Activated CD4-positive, alpha-beta memory T cell treated with anti-CD3 and anti-CD28 coated beads for 36 hours (primary cell): ENCODE measurements at regions of chr6 and their contacts with region 1.

Region 1: DNA sequence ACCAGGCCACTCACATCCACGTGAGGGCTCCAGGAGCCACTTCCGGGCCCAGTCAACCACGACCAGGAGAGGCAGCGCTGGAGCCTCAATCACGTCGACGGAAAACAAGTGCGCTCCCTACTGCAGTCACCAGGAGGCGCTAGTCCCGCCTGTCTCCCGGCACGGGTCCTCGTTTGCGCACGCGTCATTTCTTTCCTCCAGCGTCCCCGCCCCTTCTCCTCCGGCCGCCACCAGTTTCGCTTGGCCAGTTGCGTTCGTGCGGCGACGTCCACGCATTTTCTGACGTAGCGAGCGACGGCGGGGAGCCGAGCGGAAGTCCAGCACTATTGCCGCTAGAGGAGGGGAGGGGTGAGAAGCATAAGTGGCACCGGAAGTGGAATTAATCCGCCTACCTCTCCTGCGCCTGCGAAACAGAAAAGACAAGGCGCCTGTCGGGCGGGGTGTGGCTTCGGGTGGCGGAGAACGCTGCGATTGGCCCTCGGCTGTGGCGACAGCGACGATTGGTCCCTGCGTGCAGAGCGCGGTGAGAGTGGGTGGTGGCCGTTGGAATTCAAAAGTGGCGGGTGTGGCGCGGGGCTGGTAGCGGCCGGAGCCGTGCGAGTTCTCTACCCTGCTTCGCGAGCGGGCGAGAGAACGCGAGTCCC is at the start of gene KIFC1:
- DNase-seq: peak; percentile 100
- H3K4me3 Mint-ChIP-seq: peak within 1 kb of the TSS; percentile 94
- H3K27ac Mint-ChIP-seq: peak within 1 kb of the TSS; percentile 95
- H3K4me1 Mint-ChIP-seq: peaks cover 38% of the 10 kb centered on the region
- H3K27me3 Mint-ChIP-seq: no peaks in the 10 kb centered on the region
- total RNA-seq, gene KIFC1: 94.6 to 103 TPM

Region 2: DNA sequence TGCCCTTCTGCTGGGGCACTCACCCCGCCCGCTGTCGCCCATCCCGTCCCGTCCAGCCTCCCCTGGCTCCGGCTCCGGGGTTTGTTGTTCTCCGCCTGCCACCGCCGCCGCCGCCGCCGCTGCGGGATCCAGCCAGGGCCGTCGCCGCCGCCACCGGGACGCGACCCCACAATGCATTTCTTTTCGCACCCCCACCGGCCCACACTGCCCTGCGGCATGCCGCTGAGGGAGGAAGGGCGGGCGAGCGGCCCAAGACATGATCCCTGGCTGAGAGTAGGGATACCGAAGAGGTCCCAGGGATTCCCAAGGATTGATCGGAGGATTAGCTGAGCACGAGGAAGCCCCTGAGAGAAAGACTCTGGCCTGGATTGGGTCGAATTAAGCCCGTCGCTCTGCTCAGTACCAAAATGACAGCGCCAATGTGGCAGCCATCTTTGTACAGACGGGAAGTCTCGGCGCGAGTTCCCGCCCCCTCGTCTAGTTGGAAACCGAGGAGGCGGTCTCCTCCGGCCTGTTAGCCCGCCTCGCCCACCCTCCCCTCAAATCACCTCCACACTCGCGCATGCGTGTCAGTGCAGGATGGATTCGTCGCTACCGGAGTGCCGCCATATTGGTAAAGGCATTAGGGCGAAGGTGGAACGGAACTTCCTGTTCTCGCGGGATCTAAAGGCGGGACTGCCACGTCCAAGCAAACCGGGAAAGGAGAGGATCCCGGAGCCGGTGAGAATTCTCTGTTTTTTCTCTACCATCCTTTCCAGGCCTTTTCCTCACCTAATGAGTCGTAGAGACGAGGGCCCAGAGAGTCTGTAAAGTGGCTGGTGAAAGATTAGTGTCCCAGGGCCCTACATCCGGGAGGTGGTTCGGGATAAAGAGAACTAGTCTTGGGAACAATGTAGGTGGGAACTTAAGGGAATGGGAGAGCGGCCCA is 190.9 kb before region 1 on chr6 and contains the starts of genes RXRB and SLC39A7:
- CTCF ChIA-PET with region 1: no interaction called
- POLR2A ChIA-PET with region 1: no interaction called
- intact Hi-C with region 1: loop called (anchors 1 kb)
- DNase-seq: peak; percentile 100
- H3K4me3 Mint-ChIP-seq: peak within 1 kb of the TSS; percentile 94
- H3K27ac Mint-ChIP-seq: peak within 1 kb of the TSS; percentile 96
- H3K4me1 Mint-ChIP-seq: peaks cover 60% of the 10 kb centered on the region
- H3K27me3 Mint-ChIP-seq: no peaks in the 10 kb centered on the region
- total RNA-seq, gene RXRB: 40.9 to 41.4 TPM
- total RNA-seq, gene SLC39A7: 42.0 to 45.7 TPM

Region 3: GRCh38 chr6:33299237-33299944 is 92.0 kb before region 1 on chr6:
- CTCF ChIA-PET with region 1: interaction called, 3 read pairs
- POLR2A ChIA-PET with region 1: no interaction called
- intact Hi-C with region 1: loop called (anchors 5 kb)
- DNase-seq: peak; percentile 96
- H3K4me3 Mint-ChIP-seq: peak overlapping the region; percentile 89
- H3K27ac Mint-ChIP-seq: peak overlapping the region; percentile 96
- H3K4me1 Mint-ChIP-seq: peaks cover 30% of the 10 kb centered on the region
- H3K27me3 Mint-ChIP-seq: no peaks in the 10 kb centered on the region

Region 4: GRCh38 chr6:33323623-33323948 is 67.8 kb before region 1 on chr6:
- CTCF ChIA-PET with region 1: no interaction called
- POLR2A ChIA-PET with region 1: no interaction called
- intact Hi-C with region 1: loop called (anchors 1 kb)
- DNase-seq: no peak
- H3K4me3 Mint-ChIP-seq: peak overlapping the region; percentile 89
- H3K27ac Mint-ChIP-seq: peak overlapping the region; percentile 98
- H3K4me1 Mint-ChIP-seq: peaks cover 47% of the 10 kb centered on the region
- H3K27me3 Mint-ChIP-seq: no peaks in the 10 kb centered on the region

Region 5: GRCh38 chr6:33410050-33410710 is 18.8 kb after region 1 on chr6:
- CTCF ChIA-PET with region 1: interaction called, 7 read pairs
- POLR2A ChIA-PET with region 1: interaction called, 6 read pairs
- intact Hi-C with region 1: loop called (anchors 1 kb)
- DNase-seq: peak; percentile 98
- H3K4me3 Mint-ChIP-seq: peak overlapping the region; percentile 84
- H3K27ac Mint-ChIP-seq: peak overlapping the region; percentile 91
- H3K4me1 Mint-ChIP-seq: peaks cover 45% of the 10 kb centered on the region
- H3K27me3 Mint-ChIP-seq: no peaks in the 10 kb centered on the region

Region 6: DNA sequence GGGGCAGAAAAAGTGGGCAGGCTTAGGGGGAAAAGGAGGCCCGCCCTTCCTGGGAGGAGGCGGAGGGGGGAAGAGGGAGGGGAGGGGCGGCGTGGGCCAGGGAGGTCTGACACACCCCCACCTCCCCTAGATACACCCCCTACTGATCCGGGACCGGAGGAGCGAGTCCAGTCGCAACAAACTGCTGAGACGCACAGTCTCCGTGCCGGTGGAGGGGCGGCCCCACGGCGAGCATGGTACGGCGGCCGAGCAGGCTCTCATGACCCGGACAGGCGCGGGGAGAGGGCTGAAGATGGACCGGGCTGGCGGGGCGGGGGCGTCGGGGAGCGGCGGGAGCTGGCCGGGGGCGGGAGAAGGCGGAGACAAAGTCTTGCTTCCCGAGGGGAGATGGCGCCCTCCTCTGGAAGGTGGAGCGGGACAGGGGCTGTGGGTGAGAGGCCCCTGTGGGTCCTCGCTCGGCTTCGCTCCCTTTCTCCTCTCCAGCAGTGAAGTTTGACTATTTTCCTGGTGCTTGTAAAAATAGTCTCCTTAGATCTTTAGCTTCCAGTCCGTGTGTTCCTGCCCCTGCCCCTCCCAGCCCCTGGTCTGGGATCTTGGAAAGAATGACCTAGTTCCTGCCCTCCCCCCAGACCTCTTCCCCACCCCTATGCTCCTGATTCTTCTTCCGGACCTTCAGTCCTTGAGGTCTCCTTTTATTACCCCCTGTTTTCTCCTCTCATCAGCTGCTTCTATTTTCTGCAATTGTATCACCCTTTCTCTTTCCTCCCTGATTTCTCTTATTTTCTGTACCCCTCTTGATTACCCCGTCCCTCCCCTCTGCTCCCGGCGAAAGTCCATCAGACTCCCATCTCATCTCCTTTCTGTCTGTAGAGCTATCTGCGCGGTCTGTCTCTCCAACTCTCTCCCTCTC is 34.5 kb after region 1 on chr6:
- CTCF ChIA-PET with region 1: interaction called, 21 read pairs
- POLR2A ChIA-PET with region 1: interaction called, 16 read pairs
- intact Hi-C with region 1: loop called (anchors 1 kb)
- DNase-seq: peak; percentile 93
- H3K4me3 Mint-ChIP-seq: peak overlapping the region; percentile 83
- H3K27ac Mint-ChIP-seq: peak overlapping the region; percentile 89
- H3K4me1 Mint-ChIP-seq: peaks cover 56% of the 10 kb centered on the region
- H3K27me3 Mint-ChIP-seq: no peaks in the 10 kb centered on the region

Region 7: GRCh38 chr6:33454009-33454946 is 62.9 kb after region 1 on chr6 and contains the start of gene ZBTB9:
- CTCF ChIA-PET with region 1: interaction called, 7 read pairs
- POLR2A ChIA-PET with region 1: interaction called, 4 read pairs
- intact Hi-C with region 1: loop called (anchors 1 kb)
- DNase-seq: peak; percentile 97
- H3K4me3 Mint-ChIP-seq: peak within 1 kb of the TSS; percentile 92
- H3K27ac Mint-ChIP-seq: peak within 1 kb of the TSS; percentile 74
- H3K4me1 Mint-ChIP-seq: peaks cover 34% of the 10 kb centered on the region
- H3K27me3 Mint-ChIP-seq: no peaks in the 10 kb centered on the region
- total RNA-seq, gene ZBTB9: 9.7 to 10.1 TPM

Region 8: GRCh38 chr6:33744001-33744848 is 352.8 kb after region 1 on chr6:
- CTCF ChIA-PET with region 1: no interaction called
- POLR2A ChIA-PET with region 1: no interaction called
- intact Hi-C with region 1: no loop called
- DNase-seq: peak; percentile 82
- H3K4me3 Mint-ChIP-seq: no peak overlapping the region
- H3K27ac Mint-ChIP-seq: no peak overlapping the region
- H3K4me1 Mint-ChIP-seq: peaks cover 2% of the 10 kb centered on the region
- H3K27me3 Mint-ChIP-seq: peaks cover 7% of the 10 kb centered on the region